ENCODE measurements at regions of chr11 and their contacts with region 1.

Region 1: GRCh38 chr11:66408488-66409214 is 12.2 kb upstream of the NPAS4 start:
- DNase-seq: peak; percentile 91
- ATAC-seq: peak; percentile 96 to 97

Region 2: GRCh38 chr11:66299186-66299585 is 109.5 kb before region 1 on chr11:
- intact Hi-C with region 1: no loop called
- DNase-seq: no peak
- ATAC-seq: peak in 1 of 2 donors; percentile 41

Region 3: DNA sequence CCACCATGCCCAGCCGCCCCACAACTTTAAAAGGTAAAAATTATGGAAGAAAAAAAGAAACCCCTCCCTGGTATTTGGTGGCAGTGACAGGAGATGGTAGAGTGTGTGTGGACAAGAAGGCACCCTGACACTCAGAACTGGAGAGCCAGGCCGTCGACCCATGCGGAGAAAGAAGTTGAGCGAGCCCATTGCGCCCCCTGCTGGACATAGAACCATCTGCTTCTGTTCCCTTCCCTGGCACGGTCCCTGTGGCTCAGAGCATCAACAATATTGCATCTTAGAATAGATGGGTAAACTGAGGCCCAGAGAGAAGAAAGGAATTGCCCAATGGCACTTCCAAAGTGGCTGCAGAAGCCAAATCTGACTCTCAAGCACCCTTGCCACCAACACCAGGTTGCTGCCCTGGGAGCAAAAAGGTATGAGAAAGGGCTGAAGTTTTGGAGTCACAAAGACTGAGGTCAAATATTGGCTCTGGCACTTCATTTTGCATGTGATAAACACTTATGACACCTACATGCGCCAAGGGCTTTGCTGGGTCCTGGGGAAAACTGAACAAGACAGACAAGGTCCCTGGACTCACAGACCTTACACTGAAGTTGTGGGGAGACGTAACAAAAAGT is 21.4 kb after region 1 on chr11:
- intact Hi-C with region 1: loop called in 1 of 2 experiments (anchors 1 kb)
- DNase-seq: peak; percentile 76
- ATAC-seq: peak; percentile 84 to 85

Region 4: DNA sequence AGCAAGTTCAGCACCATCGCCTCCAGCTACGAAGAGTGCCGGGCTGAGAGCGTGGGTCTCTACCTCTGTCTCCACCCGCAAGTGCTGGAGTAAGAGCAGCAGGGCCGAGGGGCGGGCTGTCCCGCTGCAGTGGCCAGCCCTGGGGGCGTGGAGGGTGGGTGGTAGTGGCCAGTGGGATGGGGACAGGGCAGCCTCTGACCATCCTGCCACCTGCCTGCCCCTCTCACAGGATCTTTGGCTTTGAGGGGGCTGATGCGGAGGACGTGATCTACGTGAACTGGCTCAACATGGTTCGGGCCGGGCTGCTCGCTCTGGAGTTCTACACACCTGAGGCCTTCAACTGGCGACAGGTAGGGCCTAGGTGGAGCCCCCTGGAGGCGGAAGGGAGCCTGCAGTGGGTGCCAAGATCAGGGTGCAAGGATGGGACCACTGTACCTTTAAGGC is 86.8 kb after region 1 on chr11:
- intact Hi-C with region 1: no loop called
- DNase-seq: no peak
- ATAC-seq: no peak

Region 5: GRCh38 chr11:66677599-66678375 is 269.1 kb after region 1 on chr11 and contains the start of gene RBM4B:
- intact Hi-C with region 1: loop called in 1 of 2 experiments (anchors 5 kb)
- DNase-seq: peak; percentile 98
- ATAC-seq: peak; percentile 98 to 99
- total RNA-seq, gene RBM4B: 8.0 to 13.8 TPM

Measured in left cardiac atrium (tissue), 4 donors.